WTC11 (cell line): ENCODE measurements at regions of chr1 and their contacts with region 1.

Region 1: DNA sequence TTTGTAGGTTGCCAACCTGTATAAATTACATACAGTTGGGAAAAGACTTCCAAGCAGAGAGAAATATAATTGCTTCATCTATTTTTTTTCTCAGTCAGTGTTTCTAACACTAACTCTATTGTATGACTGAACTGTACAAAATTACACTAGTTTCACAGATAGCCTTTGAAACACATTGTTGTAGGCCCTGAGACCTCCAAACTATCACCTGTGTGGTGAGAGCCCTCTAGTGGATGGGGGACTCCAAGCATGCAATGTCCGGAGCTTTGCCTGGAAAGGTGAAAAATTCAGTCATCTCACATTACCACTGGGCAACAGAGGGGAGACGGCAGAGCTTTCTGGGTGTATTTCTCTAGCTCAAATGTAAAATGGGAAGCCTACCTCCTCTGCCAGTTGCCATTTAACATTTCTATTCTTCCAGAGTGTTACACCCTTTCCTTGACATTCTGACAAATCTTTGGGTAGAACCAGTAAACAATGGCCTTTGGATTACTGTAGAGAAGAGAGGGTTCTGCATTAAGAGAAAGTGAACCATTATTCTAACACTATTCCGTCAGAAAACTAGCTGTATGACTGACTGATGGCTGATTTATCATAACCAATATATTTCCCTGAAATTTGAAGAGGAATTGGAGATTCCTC is 212.2 kb downstream of the LYPLAL1 start:
- DNase-seq: peak; percentile 74
- ATAC-seq: peak; percentile 99
- H3K4me3 Mint-ChIP-seq: no peak overlapping the region
- H3K27ac Mint-ChIP-seq: no peak overlapping the region
- H3K4me1 Mint-ChIP-seq: peaks cover 24% of the 10 kb centered on the region
- H3K27me3 Mint-ChIP-seq: no peaks in the 10 kb centered on the region
- CTCF ChIP-seq: peak; percentile 73

Region 2: GRCh38 chr1:219257751-219258150 is 128.2 kb before region 1 on chr1:
- CTCF ChIA-PET with region 1: no interaction called
- POLR2A ChIA-PET with region 1: no interaction called
- DNase-seq: no peak
- ATAC-seq: no peak
- H3K4me3 Mint-ChIP-seq: no peak overlapping the region
- H3K27ac Mint-ChIP-seq: no peak overlapping the region
- H3K4me1 Mint-ChIP-seq: no peaks in the 10 kb centered on the region
- H3K27me3 Mint-ChIP-seq: no peaks in the 10 kb centered on the region
- CTCF ChIP-seq: no peak

Region 3: DNA sequence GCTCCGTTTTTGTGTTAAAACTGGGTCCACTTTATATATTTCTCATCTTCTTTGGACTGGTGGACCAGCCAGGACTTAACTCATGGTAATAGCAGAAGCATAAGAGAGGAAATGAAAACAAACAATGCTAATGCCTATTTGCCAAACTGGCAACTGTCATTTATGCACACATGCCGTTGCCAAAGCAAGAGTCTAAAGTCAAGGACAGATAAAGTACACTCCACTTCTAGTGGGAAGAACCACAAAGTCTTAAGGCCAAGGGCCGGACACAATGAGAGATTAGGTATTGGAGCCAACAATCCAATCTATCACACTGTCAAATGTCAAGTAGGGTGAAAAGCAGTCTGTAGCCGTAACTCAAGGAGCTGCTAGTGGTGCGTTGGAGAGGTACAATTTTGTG is 54.5 kb before region 1 on chr1:
- CTCF ChIA-PET with region 1: no interaction called
- POLR2A ChIA-PET with region 1: no interaction called
- DNase-seq: no peak
- ATAC-seq: no peak
- H3K4me3 Mint-ChIP-seq: no peak overlapping the region
- H3K27ac Mint-ChIP-seq: no peak overlapping the region
- H3K4me1 Mint-ChIP-seq: no peaks in the 10 kb centered on the region
- H3K27me3 Mint-ChIP-seq: no peaks in the 10 kb centered on the region
- CTCF ChIP-seq: no peak

Region 4: GRCh38 chr1:219373616-219373935 is 12.3 kb before region 1 on chr1:
- CTCF ChIA-PET with region 1: interaction called, 19 read pairs
- POLR2A ChIA-PET with region 1: no interaction called
- DNase-seq: no peak
- ATAC-seq: no peak
- H3K4me3 Mint-ChIP-seq: no peak overlapping the region
- H3K27ac Mint-ChIP-seq: no peak overlapping the region
- H3K4me1 Mint-ChIP-seq: peaks cover 16% of the 10 kb centered on the region
- H3K27me3 Mint-ChIP-seq: no peaks in the 10 kb centered on the region
- CTCF ChIP-seq: no peak

Region 5: DNA sequence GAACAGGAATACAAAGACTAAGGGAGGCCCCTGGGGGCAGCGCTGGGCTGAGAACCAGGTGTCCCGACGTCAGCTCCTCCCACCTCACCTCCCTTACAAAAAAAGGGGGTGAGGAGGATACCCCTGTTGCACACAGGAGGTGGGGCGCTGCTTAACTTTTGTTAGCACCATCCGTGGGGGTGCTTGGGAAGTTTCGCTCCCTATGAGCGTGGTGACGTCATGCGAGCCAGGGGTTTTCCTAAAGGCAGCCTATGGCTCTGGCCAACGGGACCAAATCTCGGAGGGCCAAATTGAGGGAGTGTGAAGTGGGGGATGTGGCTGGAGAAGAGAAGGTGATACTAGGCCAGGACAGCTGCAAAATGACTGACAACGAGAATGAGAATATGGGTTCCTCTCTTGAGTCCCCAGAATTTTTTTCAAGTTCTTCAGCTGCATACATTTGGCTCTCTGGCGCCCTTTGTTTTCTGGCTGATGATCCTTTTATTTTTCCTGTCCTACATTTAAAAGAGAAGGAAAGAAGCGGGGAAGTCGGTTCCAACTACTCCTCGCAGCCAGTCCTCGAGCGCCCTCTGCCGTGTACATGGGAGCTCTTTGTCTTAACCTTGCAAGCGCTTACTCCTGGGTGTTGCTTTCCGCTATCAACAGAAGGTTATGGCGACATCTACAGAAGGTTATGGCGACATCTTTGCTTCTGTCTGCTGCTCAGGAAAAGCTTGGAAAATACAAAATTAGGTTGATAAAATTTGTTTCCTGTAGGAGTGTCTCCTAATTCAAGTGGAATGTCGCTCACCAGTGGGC is 275.0 kb after region 1 on chr1:
- CTCF ChIA-PET with region 1: interaction called, 14 read pairs
- POLR2A ChIA-PET with region 1: no interaction called
- DNase-seq: peak; percentile 95
- ATAC-seq: peak; percentile 95
- H3K4me3 Mint-ChIP-seq: peak overlapping the region; percentile 64
- H3K27ac Mint-ChIP-seq: peak overlapping the region; percentile 38
- H3K4me1 Mint-ChIP-seq: peaks cover 27% of the 10 kb centered on the region
- H3K27me3 Mint-ChIP-seq: no peaks in the 10 kb centered on the region
- CTCF ChIP-seq: peak; percentile 79